ENCODE measurements at regions of chr3 and their contacts with region 1.

Region 1: DNA sequence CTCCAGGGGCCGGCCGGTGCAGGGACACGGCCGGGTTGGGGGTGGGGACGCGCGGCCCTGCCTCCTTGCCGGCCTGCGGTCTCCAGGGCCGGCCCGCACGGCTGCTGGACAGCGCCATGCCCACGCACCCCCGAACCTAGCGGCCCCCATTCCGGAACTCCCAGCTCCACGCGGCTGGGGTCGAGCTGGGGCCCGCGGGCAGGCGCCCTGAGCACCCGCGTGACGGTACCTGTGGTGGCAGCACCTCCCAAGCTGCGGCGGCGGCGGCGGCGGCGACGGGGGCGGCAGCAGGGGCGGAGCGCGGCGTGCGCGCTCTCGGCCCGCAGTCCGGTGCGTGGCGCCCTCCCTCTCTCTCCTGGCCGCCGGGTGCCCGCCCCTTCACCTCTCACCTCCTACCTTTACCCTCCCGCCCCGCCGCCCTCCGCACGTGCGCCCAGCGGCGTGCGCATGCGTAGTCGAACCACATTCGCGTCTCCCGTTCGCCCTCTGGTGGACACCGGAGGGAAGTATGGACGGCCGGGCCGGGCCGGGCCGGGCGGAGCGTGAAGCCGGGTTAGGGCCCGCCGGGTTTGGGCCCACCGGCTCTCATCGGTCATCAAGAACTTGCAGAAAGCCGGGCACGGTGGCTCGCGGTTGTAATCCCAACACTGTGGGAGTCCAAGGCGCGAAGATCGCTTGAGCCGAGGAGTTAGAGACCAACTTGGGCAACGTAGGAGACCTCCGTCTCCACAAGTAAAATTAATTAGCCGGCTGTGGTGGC is at the start of gene SCAP:
- DNase-seq: peak; percentile 59 to 88
- ATAC-seq: peak; percentile 89 to 94
- H3K4me3 ChIP-seq: peak within 1 kb of the TSS; percentile 99
- H3K27ac ChIP-seq: peak within 1 kb of the TSS; percentile 96 to 97
- H3K4me1 ChIP-seq: no peaks in the 10 kb centered on the region; the same call in 2 of the 3 replicates
- CTCF ChIP-seq: peak; percentile 75
- EP300 ChIP-seq: no peak
- POLR2A ChIP-seq: peak; percentile 38
- RAD21 ChIP-seq: peak; percentile 52 to 62
- polyA plus RNA-seq, gene SCAP: 12.9 and 27.2 TPM in 2 replicates

Region 2: DNA sequence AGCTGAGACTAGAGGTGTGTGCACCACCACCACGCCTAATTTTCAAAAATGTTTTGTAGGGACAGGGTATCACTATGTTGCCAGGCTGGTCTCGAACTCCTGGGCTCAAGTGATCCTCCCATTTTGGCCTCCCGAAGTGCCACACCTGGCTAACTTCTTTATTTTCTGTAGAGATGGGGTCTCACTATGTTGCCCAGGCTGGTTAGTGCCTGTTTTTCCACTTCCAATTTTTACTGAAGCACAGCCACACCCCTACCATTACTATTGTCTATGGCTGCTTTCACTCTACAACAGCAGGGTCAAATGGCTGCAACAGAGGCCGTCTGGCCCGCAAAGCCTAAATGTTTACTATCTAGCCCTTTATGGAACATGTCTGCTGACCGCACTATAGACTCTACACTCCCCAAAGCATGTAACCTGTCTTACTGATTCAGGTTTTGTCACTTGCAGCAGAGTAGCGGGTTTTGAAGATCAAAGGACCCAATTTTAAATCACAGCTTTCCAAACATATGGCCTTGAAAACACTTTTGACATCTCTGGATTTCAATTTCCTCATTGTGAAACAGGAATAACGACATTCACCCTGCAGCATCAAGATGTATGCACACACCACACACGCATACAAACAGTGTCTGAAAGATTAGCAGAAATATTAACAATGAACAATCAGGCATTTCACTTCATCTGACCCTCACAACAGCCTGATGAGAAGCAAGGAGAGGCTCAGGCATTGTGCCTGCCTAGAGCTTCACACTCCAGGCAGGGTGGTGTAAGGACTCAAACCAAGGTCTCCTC is 46.1 kb before region 1 on chr3:
- CTCF ChIA-PET with region 1: interaction called, 34 read pairs
- POLR2A ChIA-PET with region 1: no interaction called
- DNase-seq: no peak
- ATAC-seq: no peak
- H3K4me3 ChIP-seq: no peak overlapping the region
- H3K27ac ChIP-seq: no peak overlapping the region
- H3K4me1 ChIP-seq: no peaks in the 10 kb centered on the region
- CTCF ChIP-seq: no peak
- EP300 ChIP-seq: no peak
- POLR2A ChIP-seq: no peak
- RAD21 ChIP-seq: no peak

Region 3: DNA sequence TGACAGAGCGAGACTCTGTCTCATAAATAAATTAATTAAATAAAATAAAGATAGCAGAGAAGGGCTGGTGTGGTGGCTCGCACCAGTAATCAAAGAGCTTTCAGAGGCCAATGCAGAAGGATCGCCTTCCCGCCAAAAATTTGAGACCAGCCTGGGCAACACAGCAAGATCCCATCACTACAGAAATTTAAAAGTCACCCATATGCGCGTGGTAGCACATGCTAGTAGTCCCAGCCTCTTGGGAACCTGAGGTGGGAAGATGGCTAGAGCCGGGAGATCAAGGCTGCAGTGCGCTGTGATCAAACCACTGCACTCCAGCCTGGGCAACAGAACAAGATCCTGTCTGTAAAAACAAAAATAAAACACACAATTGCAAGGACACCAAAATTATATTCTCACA is 296.3 kb after region 1 on chr3:
- CTCF ChIA-PET with region 1: no interaction called
- POLR2A ChIA-PET with region 1: no interaction called
- DNase-seq: no peak
- ATAC-seq: no peak
- H3K4me3 ChIP-seq: no peak overlapping the region
- H3K27ac ChIP-seq: no peak overlapping the region
- H3K4me1 ChIP-seq: no peaks in the 10 kb centered on the region
- CTCF ChIP-seq: no peak
- EP300 ChIP-seq: no peak
- POLR2A ChIP-seq: no peak
- RAD21 ChIP-seq: no peak